ENCODE measurements at regions of chr18 and their contacts with region 1.

Region 1: DNA sequence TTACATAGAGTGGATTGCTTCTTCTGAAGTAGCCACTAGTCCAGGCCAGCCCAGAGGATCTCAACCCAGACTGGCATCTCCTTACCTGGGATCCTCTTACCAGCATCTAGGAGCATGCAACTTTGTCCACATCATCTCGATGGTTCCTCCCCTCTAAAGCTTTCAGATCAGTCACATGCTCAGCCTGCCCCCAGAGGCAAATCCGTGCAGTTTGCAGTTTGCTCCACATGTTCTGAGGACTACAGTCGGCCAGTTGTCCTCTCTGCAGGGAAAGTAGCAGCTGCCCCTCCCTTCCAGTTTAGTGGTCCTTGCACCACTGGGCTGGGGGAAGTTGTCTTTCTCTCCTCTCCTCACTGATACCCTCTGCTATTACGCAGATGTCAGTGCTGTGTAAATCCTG is 259.8 kb upstream of the APCDD1 start:
- DNase-seq: no peak
- H3K4me3 ChIP-seq: no peak overlapping the region
- H3K27ac ChIP-seq: no peak overlapping the region
- H3K4me1 ChIP-seq: no peaks in the 10 kb centered on the region
- H3K27me3 ChIP-seq: no peaks in the 10 kb centered on the region
- CTCF ChIP-seq: no peak

Region 2: GRCh38 chr18:10099539-10100140 is 95.0 kb before region 1 on chr18:
- CTCF ChIA-PET with region 1: no interaction called
- dilution Hi-C with region 1: loop called (anchors 5 kb)
- in situ Hi-C with region 1: no loop called
- intact Hi-C with region 1: no loop called
- DNase-seq: no peak
- H3K4me3 ChIP-seq: no peak overlapping the region
- H3K27ac ChIP-seq: no peak overlapping the region
- H3K4me1 ChIP-seq: no peaks in the 10 kb centered on the region
- H3K27me3 ChIP-seq: peaks cover 3% of the 10 kb centered on the region
- CTCF ChIP-seq: no peak

Measured in mammary epithelial cell (primary cell).